Activated CD4-positive, alpha-beta memory T cell treated with anti-CD3 and anti-CD28 coated beads for 36 hours (primary cell): ENCODE measurements at regions of chr2 and their contacts with region 1.

Region 1: DNA sequence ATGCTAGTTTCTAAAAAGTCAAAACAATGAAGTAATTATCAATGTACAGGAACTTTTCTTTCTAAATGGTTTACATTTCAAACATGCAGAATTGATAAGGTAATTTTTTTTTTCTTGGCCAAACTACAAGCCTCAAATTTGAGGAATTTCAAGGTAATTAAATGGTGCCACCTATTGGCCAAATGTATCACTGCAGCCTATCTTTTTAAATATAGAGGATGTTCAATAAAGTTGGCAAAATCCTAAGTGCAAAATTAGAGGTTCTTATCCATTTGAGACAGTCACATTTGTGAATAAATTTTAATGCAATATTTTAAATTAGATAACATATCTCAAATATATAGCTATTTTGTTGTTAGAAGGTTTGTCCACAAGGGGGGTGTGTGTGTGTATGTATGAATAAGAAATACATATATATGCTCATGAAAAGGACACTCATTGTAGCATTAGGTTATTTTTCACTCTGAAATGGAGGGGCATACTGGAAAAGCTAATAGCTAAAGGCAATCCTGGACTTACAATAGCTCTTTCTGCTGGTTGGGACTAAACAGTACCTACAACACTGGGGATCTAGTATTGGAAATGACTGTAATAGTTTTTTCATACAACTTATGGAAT is 26.2 kb downstream of the MMADHC start:
- DNase-seq: no peak
- H3K4me3 Mint-ChIP-seq: no peak overlapping the region
- H3K27ac Mint-ChIP-seq: no peak overlapping the region
- H3K4me1 Mint-ChIP-seq: no peaks in the 10 kb centered on the region
- H3K27me3 Mint-ChIP-seq: no peaks in the 10 kb centered on the region

Region 2: DNA sequence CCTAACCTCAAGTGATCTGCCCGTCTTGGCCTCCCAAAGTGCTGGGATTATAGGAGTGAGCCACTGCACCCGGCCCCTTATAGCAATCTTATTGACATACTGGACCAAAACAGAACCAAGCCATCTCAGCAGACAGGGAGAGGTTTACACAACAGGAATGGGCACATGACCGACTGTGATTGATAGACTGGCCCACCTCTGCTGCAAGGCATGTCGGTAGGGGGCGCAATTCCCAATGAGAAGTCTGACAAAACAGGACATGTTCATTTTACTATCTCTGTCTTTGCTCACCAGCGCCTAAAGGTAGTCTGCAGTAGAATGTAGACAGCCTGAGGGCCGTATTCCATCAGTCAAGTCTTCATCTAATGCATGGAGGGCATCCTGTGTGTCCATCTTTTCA is 521.0 kb before region 1 on chr2:
- CTCF ChIA-PET with region 1: interaction called, 6 read pairs
- POLR2A ChIA-PET with region 1: no interaction called
- intact Hi-C with region 1: loop called (anchors 1 kb)
- DNase-seq: peak; percentile 74
- H3K4me3 Mint-ChIP-seq: no peak overlapping the region
- H3K27ac Mint-ChIP-seq: no peak overlapping the region
- H3K4me1 Mint-ChIP-seq: no peaks in the 10 kb centered on the region
- H3K27me3 Mint-ChIP-seq: peaks cover 37% of the 10 kb centered on the region

Region 3: DNA sequence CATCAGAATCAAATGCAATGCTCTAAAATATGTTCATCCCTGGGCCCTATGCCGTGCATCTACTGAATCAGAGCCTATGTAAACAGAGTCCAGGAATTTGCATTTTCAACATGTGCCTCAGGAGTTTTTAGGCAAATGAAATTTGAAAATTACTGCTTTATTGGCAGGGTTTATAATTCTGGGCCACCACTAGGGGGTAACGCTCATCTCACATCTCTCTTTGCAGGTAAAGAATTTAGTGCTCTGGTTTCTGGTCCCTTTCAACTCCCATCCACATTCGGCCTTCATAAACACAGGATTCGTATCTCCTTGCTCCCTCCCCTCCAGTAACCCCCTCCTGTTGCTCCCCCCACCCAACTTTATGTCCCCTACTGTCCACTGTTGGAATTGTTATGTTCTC is 473.7 kb before region 1 on chr2:
- CTCF ChIA-PET with region 1: no interaction called
- POLR2A ChIA-PET with region 1: no interaction called
- intact Hi-C with region 1: loop called (anchors 1 kb)
- DNase-seq: no peak
- H3K4me3 Mint-ChIP-seq: no peak overlapping the region
- H3K27ac Mint-ChIP-seq: no peak overlapping the region
- H3K4me1 Mint-ChIP-seq: no peaks in the 10 kb centered on the region
- H3K27me3 Mint-ChIP-seq: peaks cover 4% of the 10 kb centered on the region

Region 4: GRCh38 chr2:149160701-149161217 is 400.7 kb before region 1 on chr2:
- CTCF ChIA-PET with region 1: interaction called, 3 read pairs
- POLR2A ChIA-PET with region 1: no interaction called
- intact Hi-C with region 1: loop called (anchors 10 kb)
- DNase-seq: peak; percentile 43
- H3K4me3 Mint-ChIP-seq: no peak overlapping the region
- H3K27ac Mint-ChIP-seq: no peak overlapping the region
- H3K4me1 Mint-ChIP-seq: peaks cover 17% of the 10 kb centered on the region
- H3K27me3 Mint-ChIP-seq: peaks cover 11% of the 10 kb centered on the region

Region 5: GRCh38 chr2:149329489-149330125 is 231.8 kb before region 1 on chr2:
- CTCF ChIA-PET with region 1: no interaction called
- POLR2A ChIA-PET with region 1: no interaction called
- intact Hi-C with region 1: loop called (anchors 10 kb)
- DNase-seq: no peak
- H3K4me3 Mint-ChIP-seq: peak overlapping the region; percentile 45
- H3K27ac Mint-ChIP-seq: no peak overlapping the region
- H3K4me1 Mint-ChIP-seq: peaks cover 6% of the 10 kb centered on the region
- H3K27me3 Mint-ChIP-seq: peaks cover 43% of the 10 kb centered on the region